Keratinocyte (primary cell): ENCODE measurements at regions of chr1 and their contacts with region 1.

Region 1: GRCh38 chr1:25204797-25205480 is 27.4 kb downstream of the SYF2 start:
- DNase-seq: no peak
- H3K4me3 ChIP-seq: no peak overlapping the region
- H3K27ac ChIP-seq: no peak overlapping the region
- H3K4me1 ChIP-seq: no peaks in the 10 kb centered on the region
- H3K27me3 ChIP-seq: no peaks in the 10 kb centered on the region
- CTCF ChIP-seq: peak; percentile 47 to 66 (median 53)

Region 2: GRCh38 chr1:24930204-24931145 is 274.5 kb before region 1 on chr1 and contains the start of gene RUNX3:
- dilution Hi-C with region 1: loop called (anchors 25 kb)
- DNase-seq: no peak
- H3K4me3 ChIP-seq: peak within 1 kb of the TSS in 1 of 3 experiments; percentile 34
- H3K27ac ChIP-seq: no peak within 1 kb of the TSS
- H3K4me1 ChIP-seq: peaks cover 6% of the 10 kb centered on the region
- H3K27me3 ChIP-seq: peaks cover 93% of the 10 kb centered on the region
- CTCF ChIP-seq: no peak
- polyA plus RNA-seq, gene RUNX3: 0.01 to 0.10 TPM in 2 of 3 replicates, not detected in the other